ENCODE measurements at regions of chr10 and their contacts with region 1.

Region 1: GRCh38 chr10:28241741-28242399 is 61.0 kb downstream of the MPP7 start:
- DNase-seq: peak in 1 of 3 donors; percentile 58
- ATAC-seq: peak; percentile 76
- H3K4me3 ChIP-seq: no peak overlapping the region
- H3K4me1 ChIP-seq: no peaks in the 10 kb centered on the region
- CTCF ChIP-seq: peak; percentile 86

Region 2: DNA sequence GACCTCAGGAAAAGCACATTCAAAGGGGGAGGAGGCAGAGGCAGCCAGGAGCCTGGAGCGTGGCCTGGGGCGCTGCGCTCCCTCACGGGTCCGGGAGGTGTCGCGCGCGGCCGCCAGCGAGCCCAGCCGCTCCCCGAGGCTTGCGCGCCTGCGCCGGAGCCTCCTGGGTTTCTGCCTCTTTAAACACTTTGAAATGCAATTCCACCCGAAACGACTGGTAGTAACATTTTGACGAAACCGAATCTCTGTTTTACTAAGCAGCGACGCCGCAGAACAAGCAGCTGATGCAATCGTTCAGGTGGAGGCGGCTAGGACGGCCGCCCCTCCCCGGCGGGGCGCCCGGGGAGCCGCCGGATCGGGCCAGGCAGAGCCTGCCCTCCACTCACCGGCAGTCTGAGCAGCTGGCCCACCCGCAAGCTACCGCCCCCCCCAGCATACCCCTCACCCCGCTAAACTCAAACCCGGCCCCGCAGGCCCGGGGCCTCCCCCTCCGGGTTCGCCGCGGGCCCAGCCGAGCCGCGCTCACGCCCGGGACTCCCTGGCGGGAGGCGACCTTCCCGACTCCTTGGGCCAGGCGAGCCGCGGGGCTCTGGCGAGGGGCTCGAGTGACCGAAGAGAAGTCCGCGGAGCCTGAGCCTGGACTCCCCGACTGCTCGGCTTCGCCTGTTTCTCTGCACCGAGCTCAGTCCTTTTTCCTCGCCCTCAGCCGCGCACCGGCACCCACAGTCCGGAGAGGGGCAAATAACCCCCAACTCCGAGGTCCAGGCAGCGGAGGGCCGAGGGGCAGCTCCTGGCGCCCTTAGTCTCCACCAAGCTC is 499.5 kb before region 1 on chr10:
- intact Hi-C with region 1: loop called in 1 of 2 experiments (anchors 10 kb)
- DNase-seq: peak; percentile 79 to 85 (median 81)
- ATAC-seq: peak; percentile 95
- H3K4me3 ChIP-seq: peak overlapping the region; percentile 6
- H3K4me1 ChIP-seq: peaks cover 38% of the 10 kb centered on the region
- CTCF ChIP-seq: peak; percentile 72

Region 3: GRCh38 chr10:27982875-27983543 is 258.9 kb before region 1 on chr10:
- intact Hi-C with region 1: no loop called
- DNase-seq: no peak
- ATAC-seq: no peak
- H3K4me3 ChIP-seq: no peak overlapping the region
- H3K4me1 ChIP-seq: no peaks in the 10 kb centered on the region
- CTCF ChIP-seq: no peak

Region 4: DNA sequence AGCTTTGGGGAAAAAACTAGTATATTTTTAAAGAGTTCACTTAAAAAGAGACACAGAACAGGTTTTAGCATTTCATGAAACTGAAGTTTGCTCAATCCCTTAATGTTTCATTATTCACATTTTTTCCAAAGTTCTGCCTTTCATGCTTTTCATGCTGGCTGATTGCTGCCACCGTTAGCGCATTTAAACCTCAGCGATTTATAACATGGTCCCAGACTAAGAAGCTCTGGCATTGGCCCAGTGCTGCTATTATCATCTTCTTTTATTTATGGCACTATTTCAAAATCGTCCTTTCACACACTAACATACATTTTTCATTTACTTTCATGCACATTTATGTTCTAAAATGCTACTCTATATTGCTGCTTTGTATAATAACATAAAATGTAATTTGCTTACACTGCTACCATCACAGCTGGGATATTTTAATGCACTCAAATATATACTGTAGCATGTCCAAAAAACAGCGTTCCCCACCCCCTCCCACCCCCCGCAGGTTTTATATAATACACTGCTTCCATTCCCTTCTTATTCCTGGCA is 80.9 kb before region 1 on chr10:
- intact Hi-C with region 1: no loop called
- DNase-seq: no peak
- ATAC-seq: no peak
- H3K4me3 ChIP-seq: no peak overlapping the region
- H3K4me1 ChIP-seq: no peaks in the 10 kb centered on the region
- CTCF ChIP-seq: no peak

Region 5: DNA sequence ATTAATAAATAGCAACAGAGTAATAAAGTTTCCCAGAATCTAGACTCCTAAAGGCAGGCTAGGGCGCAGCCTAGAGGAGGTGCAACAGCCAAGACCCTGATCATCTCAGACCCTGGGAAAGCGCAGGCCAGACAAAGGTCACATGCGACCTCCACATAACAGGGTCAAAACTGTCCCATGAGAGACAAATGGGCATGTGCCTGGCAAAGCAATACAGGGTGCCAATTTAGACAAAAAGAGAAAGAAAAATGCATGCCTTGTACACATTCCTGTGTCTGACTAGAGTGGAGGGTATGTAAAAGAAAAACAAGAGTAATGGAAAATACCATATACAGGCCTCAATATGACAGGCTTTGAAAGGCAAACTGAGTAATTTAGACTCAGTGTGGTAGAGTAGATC is 38.8 kb after region 1 on chr10:
- intact Hi-C with region 1: no loop called
- DNase-seq: no peak
- ATAC-seq: no peak
- H3K4me3 ChIP-seq: no peak overlapping the region
- H3K4me1 ChIP-seq: no peaks in the 10 kb centered on the region
- CTCF ChIP-seq: no peak

Measured in mucosa of descending colon (tissue), 3 donors.